ENCODE measurements at regions of chr5 and their contacts with region 1.

Region 1: DNA sequence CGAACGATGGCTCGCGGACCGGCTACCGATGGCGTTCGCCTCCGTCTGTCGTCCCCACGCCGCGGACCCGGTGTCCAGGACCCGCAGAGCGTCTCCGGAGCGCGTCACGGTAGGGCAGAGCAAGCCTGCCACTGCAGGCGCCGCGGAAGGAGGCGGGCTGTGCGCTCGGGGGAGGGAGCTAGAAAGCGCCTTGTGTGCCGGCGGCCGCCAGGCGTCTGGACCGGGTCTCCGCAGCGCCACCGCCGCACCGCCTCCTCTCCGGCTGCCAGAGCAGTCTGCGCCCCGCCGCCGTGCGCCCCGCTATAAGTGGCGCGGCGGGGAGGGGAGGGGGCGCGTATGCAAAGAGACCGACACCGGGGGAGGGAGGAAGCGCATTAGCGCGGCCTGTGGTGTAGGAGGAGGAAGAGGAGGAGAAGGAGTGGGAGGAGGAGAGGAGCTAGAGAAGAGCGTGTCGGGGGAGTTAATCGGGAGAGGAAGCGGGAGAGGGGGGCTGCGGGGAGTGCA is at the start of gene ENC1:
- DNase-seq: peak; percentile 80 to 90
- H3K4me3 ChIP-seq: peak within 1 kb of the TSS; percentile 84
- H3K27ac ChIP-seq: peak within 1 kb of the TSS; percentile 98
- H3K4me1 ChIP-seq: peaks cover 54% of the 10 kb centered on the region
- H3K27me3 ChIP-seq: no peaks in the 10 kb centered on the region
- CTCF ChIP-seq: no peak; the same call in 1 of the 2 replicates
- total RNA-seq, gene ENC1: 38.8 and 53.6 TPM in 2 replicates

Region 2: DNA sequence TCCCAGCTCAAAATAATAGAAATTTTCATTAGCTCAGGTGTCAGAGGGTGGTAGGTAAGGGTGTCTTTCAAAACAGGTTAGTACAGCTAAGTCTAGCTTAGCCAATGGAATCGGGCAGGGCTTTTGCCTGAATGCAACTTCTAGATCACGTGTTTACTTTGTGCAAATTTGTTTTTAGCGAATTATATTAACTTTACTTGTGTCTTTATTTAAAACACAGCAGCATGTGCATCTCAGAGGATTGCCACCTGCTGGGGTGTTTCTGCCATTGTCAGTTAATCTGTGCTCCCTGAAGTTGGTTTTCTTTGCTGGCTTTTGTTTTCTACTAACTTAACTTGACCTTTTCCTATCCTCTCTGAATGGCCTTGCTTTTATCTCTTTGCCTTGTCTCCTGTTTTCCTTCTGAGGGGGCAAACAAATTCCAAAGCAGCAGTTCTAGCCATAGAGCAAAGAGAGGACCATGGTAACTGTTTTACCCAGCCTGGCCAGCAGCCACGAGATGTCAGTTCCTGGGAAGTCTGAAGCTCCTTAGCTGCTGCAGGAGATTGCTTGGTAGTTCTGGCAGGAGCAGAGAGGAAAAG is 946.9 kb before region 1 on chr5:
- CTCF ChIA-PET with region 1: no interaction called
- POLR2A ChIA-PET with region 1: interaction called, 10 read pairs
- intact Hi-C with region 1: no loop called
- DNase-seq: no peak
- H3K4me3 ChIP-seq: no peak overlapping the region
- H3K27ac ChIP-seq: no peak overlapping the region
- H3K4me1 ChIP-seq: peaks cover 35% of the 10 kb centered on the region
- H3K27me3 ChIP-seq: no peaks in the 10 kb centered on the region
- CTCF ChIP-seq: peak; percentile 66

Region 3: DNA sequence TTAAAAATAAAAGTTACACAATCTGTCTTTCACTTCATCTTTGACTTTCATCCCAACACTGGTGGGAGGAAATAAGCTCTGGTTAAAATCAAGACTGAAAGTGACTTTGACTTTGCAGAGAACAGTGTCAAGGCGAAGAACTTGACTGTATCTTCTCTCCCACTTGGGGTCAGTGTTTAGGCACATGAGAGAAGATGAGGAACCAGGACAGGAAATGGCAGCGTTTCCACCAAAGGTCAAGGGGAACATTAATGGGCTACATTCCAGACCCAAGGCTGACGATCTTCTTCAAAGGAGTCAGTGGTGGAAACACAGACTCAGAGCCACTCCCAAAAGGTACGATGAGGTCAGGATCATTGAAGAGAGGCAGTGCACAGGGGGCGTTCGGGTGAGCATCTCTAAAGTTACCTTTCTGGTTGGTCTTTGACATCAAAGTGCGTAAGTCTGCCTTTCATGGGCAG is 605.0 kb before region 1 on chr5:
- CTCF ChIA-PET with region 1: interaction called, 6 read pairs
- POLR2A ChIA-PET with region 1: interaction called, 5 read pairs
- intact Hi-C with region 1: loop called (anchors 1 kb)
- DNase-seq: peak; percentile 69 to 83
- H3K4me3 ChIP-seq: no peak overlapping the region
- H3K27ac ChIP-seq: peak overlapping the region; percentile 58
- H3K4me1 ChIP-seq: peaks cover 18% of the 10 kb centered on the region
- H3K27me3 ChIP-seq: no peaks in the 10 kb centered on the region
- CTCF ChIP-seq: peak; percentile 65

Region 4: GRCh38 chr5:74232281-74232680 is 408.2 kb before region 1 on chr5:
- CTCF ChIA-PET with region 1: no interaction called
- POLR2A ChIA-PET with region 1: interaction called, 13 read pairs
- intact Hi-C with region 1: no loop called
- DNase-seq: peak; percentile 52 to 71
- H3K4me3 ChIP-seq: no peak overlapping the region
- H3K27ac ChIP-seq: peak overlapping the region; percentile 83
- H3K4me1 ChIP-seq: peaks cover 29% of the 10 kb centered on the region
- H3K27me3 ChIP-seq: no peaks in the 10 kb centered on the region
- CTCF ChIP-seq: no peak

Region 5: GRCh38 chr5:74316064-74316679 is 324.3 kb before region 1 on chr5:
- CTCF ChIA-PET with region 1: no interaction called
- POLR2A ChIA-PET with region 1: interaction called, 6 read pairs
- intact Hi-C with region 1: loop called (anchors 1 kb)
- DNase-seq: peak; percentile 94 to 98
- H3K4me3 ChIP-seq: no peak overlapping the region
- H3K27ac ChIP-seq: peak overlapping the region; percentile 98
- H3K4me1 ChIP-seq: peaks cover 65% of the 10 kb centered on the region
- H3K27me3 ChIP-seq: no peaks in the 10 kb centered on the region
- CTCF ChIP-seq: no peak

Region 6: DNA sequence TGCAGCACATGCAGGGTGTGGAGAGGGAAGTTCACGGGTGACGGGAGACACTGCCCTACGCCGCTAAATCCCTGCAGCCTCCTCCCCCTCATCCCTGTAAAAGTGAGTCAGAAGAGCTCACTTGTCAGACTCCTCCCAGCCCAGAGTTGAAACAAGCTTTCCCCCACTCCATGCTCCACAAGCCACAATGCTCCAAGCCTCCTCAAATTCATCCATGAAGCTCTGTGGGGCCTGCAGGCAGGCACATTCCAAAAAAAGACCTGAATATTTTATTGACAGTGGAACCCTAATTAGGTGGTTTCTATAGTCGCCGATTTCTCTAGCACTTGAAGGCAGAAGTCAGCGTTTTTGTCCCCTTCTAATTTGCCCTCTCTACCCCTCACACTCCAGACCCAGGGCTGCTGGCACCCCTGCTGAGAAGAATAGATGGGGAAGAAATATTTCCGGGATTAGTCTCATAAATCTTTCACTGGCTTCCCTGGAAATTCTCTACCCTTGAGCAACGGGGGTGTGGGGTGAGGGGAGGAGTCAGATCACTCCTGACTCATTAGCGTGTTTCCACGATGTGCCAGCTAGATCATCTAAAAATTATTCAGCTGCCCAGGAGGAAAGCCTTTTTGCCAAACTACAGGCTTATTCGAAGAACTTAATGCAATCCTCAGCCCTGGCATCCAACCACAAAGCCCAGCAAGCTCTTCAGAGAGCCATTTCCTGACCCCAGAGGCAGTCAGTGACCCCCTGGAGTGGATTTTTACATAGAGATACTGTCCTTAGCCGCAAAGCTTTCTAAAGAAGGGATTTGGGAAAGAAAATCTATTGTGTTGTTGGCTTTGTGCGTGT is 97.1 kb before region 1 on chr5:
- CTCF ChIA-PET with region 1: no interaction called
- POLR2A ChIA-PET with region 1: interaction called, 7 read pairs
- intact Hi-C with region 1: loop called (anchors 1 kb)
- DNase-seq: peak; percentile 86 to 97
- H3K4me3 ChIP-seq: peak overlapping the region; percentile 31; the same call in 1 of the 2 replicates
- H3K27ac ChIP-seq: peak overlapping the region; percentile 95
- H3K4me1 ChIP-seq: peaks cover 73% of the 10 kb centered on the region
- H3K27me3 ChIP-seq: no peaks in the 10 kb centered on the region
- CTCF ChIP-seq: no peak

Region 7: GRCh38 chr5:74655206-74655605 is 14.7 kb after region 1 on chr5:
- CTCF ChIA-PET with region 1: interaction called, 11 read pairs
- POLR2A ChIA-PET with region 1: no interaction called
- intact Hi-C with region 1: no loop called
- DNase-seq: no peak
- H3K4me3 ChIP-seq: no peak overlapping the region
- H3K27ac ChIP-seq: no peak overlapping the region
- H3K4me1 ChIP-seq: no peaks in the 10 kb centered on the region
- H3K27me3 ChIP-seq: no peaks in the 10 kb centered on the region
- CTCF ChIP-seq: no peak

Measured in PC-9 (cell line).